HCT116 (cell line): ENCODE measurements at regions of chr1 and their contacts with region 1.

Region 1: GRCh38 chr1:153192697-153193096 is 10.5 kb upstream of the LELP1 start:
- DNase-seq: peak; percentile 28
- ATAC-seq: peak; percentile 88
- H3K4me3 ChIP-seq: no peak overlapping the region
- H3K27ac ChIP-seq: no peak overlapping the region
- H3K4me1 ChIP-seq: no peaks in the 10 kb centered on the region
- H3K27me3 ChIP-seq: peaks cover 56% of the 10 kb centered on the region
- CTCF ChIP-seq: peak; percentile 69 to 73 (median 72); a peak in 5 of 6 replicates
- POLR2A ChIP-seq: no peak
- RAD21 ChIP-seq: peak; percentile 80

Region 2: GRCh38 chr1:152878042-152878441 is 314.7 kb before region 1 on chr1 and contains the start of gene SMCP:
- CTCF ChIA-PET with region 1: interaction called, 94 read pairs
- POLR2A ChIA-PET with region 1: no interaction called
- RAD21 ChIA-PET with region 1: interaction called in 1 of 2 experiments, 3 read pairs
- intact Hi-C with region 1: no loop called
- DNase-seq: no peak
- ATAC-seq: peak; percentile 62
- H3K4me3 ChIP-seq: no peak within 1 kb of the TSS
- H3K27ac ChIP-seq: no peak within 1 kb of the TSS
- H3K4me1 ChIP-seq: no peaks in the 10 kb centered on the region
- H3K27me3 ChIP-seq: peaks cover 10% of the 10 kb centered on the region; the same call in 1 of the 2 replicates
- CTCF ChIP-seq: peak; percentile 16 to 65 (median 57); a peak in 5 of 6 replicates
- POLR2A ChIP-seq: no peak
- RAD21 ChIP-seq: peak; percentile 42
- total RNA-seq, gene SMCP: not detected

Region 3: DNA sequence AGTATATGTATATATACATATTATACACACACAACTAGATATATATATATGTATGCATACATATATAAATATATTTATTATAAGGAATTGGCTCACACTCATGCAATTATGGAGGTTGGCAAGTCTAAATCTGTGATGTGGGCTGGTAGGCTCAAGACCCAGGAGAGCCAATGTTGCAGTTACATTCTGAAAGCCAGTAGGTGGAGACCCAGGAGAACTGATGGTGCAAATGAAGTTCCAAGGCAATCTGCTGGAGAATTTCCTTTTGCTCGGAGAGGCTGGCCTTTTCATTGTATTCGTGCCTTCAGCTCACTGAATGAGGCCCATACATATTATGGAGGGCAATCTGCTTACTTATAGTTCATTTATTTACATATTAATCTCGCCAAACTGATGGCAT is 274.9 kb before region 1 on chr1:
- CTCF ChIA-PET with region 1: interaction called, 7 read pairs
- POLR2A ChIA-PET with region 1: no interaction called
- RAD21 ChIA-PET with region 1: no interaction called
- intact Hi-C with region 1: loop called (anchors 5 kb)
- DNase-seq: peak; percentile 18
- ATAC-seq: peak; percentile 62
- H3K4me3 ChIP-seq: no peak overlapping the region
- H3K27ac ChIP-seq: no peak overlapping the region
- H3K4me1 ChIP-seq: no peaks in the 10 kb centered on the region
- H3K27me3 ChIP-seq: peaks cover 24% of the 10 kb centered on the region
- CTCF ChIP-seq: peak; percentile 24 to 32 (median 25); a peak in 3 of 6 replicates
- POLR2A ChIP-seq: no peak
- RAD21 ChIP-seq: peak; percentile 54

Region 4: DNA sequence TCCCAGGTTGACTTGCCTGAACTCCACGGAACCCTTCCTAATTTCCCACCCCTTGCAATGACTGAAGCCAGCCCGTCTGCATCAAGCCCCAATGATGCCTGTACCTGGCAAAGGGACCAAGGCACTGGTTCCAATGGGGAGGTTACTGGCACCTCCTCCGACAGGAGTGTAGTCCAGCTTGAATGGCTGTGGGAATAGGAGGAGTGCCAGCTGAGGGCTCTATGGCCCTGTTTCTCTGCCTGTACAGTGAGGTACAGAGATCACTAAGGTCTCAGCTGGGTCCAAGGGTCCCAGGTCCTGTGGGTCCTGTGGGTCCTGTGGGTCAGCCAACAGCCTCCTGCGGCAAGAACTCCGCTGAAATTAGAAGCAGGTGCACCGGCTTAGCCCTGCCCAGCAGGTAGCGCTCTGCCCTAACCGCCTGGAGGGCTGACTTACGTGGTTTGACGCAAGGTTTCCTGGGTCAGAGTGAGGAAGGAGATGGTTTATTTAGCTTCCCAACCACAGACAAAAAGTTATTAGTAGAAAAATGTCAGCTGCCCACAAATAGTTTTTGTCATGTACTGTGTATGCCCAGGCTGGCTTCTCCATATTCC is 232.1 kb before region 1 on chr1:
- CTCF ChIA-PET with region 1: interaction called, 34 read pairs
- POLR2A ChIA-PET with region 1: no interaction called
- RAD21 ChIA-PET with region 1: no interaction called
- intact Hi-C with region 1: loop called (anchors 1 kb)
- DNase-seq: no peak
- ATAC-seq: peak; percentile 59; the same call in 1 of the 2 replicates
- H3K4me3 ChIP-seq: no peak overlapping the region
- H3K27ac ChIP-seq: no peak overlapping the region
- H3K4me1 ChIP-seq: no peaks in the 10 kb centered on the region
- H3K27me3 ChIP-seq: peaks cover 12% of the 10 kb centered on the region
- CTCF ChIP-seq: peak; percentile 43 to 51 (median 51); a peak in 4 of 6 replicates
- POLR2A ChIP-seq: no peak
- RAD21 ChIP-seq: peak; percentile 69